Breast epithelium (tissue), 4 donors: ENCODE measurements at regions of chr5 and their contacts with region 1.

Region 1: GRCh38 chr5:6632917-6633468 is at the starts of genes NSUN2 and SRD5A1:
- DNase-seq: peak; percentile 81 to 87
- H3K4me3 ChIP-seq: peak within 1 kb of the TSS; percentile 76 to 91 (median 88)
- H3K27ac ChIP-seq: peak within 1 kb of the TSS; percentile 94 to 96
- H3K4me1 ChIP-seq: no peaks in the 10 kb centered on the region
- H3K27me3 ChIP-seq: no peaks in the 10 kb centered on the region
- CTCF ChIP-seq: no peak
- POLR2A ChIP-seq: peak; percentile 24
- total RNA-seq, gene NSUN2: 36.8 to 58.7 (median 55.6) TPM
- total RNA-seq, gene SRD5A1: 3.6 to 10.6 (median 7.0) TPM

Region 2: GRCh38 chr5:6704361-6704851 is 71.4 kb after region 1 on chr5:
- intact Hi-C with region 1: loop called (anchors 10 kb)
- DNase-seq: peak in 1 of 2 donors; percentile 67
- H3K4me3 ChIP-seq: no peak overlapping the region
- H3K27ac ChIP-seq: peak overlapping the region; percentile 77 to 84
- H3K4me1 ChIP-seq: peaks cover 0 to 12% of the 10 kb centered on the region in 2 donors
- H3K27me3 ChIP-seq: peaks cover 0 to 8% of the 10 kb centered on the region in 2 donors
- CTCF ChIP-seq: no peak
- POLR2A ChIP-seq: no peak